ENCODE measurements at regions of chr16 and their contacts with region 1.

Region 1: DNA sequence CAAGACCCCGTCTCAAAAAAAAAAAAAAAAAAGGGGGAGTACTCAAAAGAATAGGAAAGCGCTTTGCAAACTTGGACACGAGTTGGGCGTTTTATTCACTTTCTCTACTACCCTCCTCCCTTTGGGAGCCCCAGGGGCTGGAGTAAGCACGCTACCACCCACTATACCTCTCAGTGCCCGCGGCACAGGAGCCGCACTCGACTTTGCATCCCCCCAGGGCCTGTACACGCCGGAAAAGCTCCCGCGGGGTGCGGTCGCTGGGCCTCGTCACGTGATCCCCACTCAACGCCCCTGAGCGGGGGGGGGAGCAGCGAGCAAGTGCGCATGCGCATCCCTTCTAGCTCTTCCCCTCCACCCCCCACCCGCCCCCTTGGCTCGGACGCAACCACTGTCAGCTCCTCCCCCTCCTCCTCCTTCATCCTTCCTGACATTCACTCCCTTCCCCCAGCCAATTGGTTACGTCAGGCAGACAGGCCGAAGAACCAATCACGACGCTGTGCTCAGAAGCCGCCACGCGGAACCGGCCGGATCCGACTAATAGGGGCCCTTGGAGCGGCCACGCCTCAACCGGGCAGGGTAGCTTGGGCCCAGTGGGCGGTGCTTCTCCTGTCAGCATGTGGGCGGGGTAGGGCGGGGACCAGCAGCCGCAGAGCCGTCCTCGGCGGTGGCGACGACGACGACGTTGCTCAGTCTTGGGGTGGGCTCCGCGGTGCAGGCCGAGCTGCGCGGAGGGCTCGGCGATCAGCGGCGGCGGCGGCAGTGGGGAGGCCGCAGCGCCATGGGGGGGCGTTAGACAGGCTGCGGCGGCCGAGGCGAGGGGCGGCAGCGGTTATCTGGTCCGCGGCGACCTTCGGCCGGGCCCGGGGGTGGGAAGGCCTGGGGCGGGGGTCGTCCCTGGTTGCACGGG is at the start of gene HAPSTR1:
- DNase-seq: peak; percentile 100
- ATAC-seq: peak; percentile 90
- H3K4me3 Mint-ChIP-seq: peak within 1 kb of the TSS; percentile 100
- H3K27ac Mint-ChIP-seq: peak within 1 kb of the TSS; percentile 99
- H3K4me1 Mint-ChIP-seq: peaks cover 24% of the 10 kb centered on the region
- H3K27me3 Mint-ChIP-seq: no peaks in the 10 kb centered on the region
- total RNA-seq, gene HAPSTR1: 55.8 to 60.4 TPM

Region 2: DNA sequence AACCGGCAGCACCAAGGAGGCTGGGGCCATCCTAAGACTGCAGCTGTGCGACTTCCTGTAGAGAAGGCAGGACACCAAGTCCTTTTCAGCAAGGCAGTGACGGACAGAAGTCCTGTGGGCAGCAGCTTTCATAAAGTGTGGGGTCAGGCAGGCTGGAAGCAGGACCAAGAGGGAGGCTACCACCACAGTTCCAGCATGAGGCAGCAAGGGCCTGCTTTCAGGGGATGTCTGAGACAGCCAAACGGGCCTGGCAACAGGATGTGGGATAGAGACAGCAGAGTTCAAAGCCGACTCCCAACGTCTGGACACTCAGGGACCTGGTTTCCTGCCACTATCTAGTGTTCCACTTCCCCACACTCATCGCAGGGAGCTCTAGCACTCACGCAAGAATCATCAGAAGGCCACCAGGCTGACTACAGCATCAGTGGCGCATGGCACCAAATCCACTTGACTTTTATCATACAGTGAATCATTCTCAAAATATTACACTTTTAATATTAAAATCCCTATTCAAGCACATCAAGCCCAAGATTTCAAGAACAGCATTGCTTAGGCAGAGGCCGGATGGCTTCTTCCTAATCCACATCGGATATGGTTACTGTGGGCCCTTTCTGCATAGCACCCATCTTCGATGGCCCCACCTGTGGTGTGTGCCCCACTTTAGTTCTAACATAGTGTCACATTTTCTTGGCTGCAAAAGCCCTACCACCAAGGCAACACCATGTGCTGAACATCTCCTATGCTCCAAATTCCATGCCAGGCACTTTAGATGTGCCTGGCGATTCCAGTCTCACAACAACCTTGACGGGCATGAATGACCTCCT is 132.7 kb before region 1 on chr16:
- CTCF ChIA-PET with region 1: no interaction called
- POLR2A ChIA-PET with region 1: interaction called, 12 read pairs
- DNase-seq: peak; percentile 55
- ATAC-seq: peak; percentile 43
- H3K4me3 Mint-ChIP-seq: peak overlapping the region; percentile 84
- H3K27ac Mint-ChIP-seq: peak overlapping the region; percentile 90
- H3K4me1 Mint-ChIP-seq: peaks cover 73% of the 10 kb centered on the region
- H3K27me3 Mint-ChIP-seq: no peaks in the 10 kb centered on the region

Region 3: GRCh38 chr16:8963825-8964441 is 127.3 kb before region 1 on chr16 and contains the start of gene USP7:
- CTCF ChIA-PET with region 1: no interaction called
- POLR2A ChIA-PET with region 1: interaction called, 12 read pairs
- DNase-seq: peak; percentile 94
- ATAC-seq: peak; percentile 93
- H3K4me3 Mint-ChIP-seq: peak within 1 kb of the TSS; percentile 84
- H3K27ac Mint-ChIP-seq: peak within 1 kb of the TSS; percentile 84
- H3K4me1 Mint-ChIP-seq: peaks cover 38% of the 10 kb centered on the region
- H3K27me3 Mint-ChIP-seq: no peaks in the 10 kb centered on the region
- total RNA-seq, gene USP7: 134 to 144 TPM

Region 4: DNA sequence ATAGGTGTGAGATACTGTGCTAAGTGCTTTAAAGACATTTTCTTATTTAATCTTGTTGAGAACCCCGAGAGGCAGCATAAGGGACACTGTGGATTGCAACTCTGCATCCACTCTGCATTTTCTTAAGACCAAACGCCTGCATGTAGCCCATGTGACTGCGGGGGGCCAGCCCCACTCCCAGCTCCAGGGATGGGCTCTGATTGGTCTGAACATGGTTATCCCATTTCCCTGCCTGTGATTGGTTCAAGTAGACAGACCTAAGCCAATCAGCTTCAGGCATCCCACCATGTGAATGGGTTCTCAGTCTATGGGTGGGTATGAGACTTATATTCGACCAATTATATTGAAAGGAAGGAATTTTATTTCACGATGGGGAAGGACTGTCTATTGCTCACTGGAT is 94.3 kb before region 1 on chr16:
- CTCF ChIA-PET with region 1: no interaction called
- POLR2A ChIA-PET with region 1: no interaction called
- DNase-seq: no peak
- ATAC-seq: no peak
- H3K4me3 Mint-ChIP-seq: no peak overlapping the region
- H3K27ac Mint-ChIP-seq: no peak overlapping the region
- H3K4me1 Mint-ChIP-seq: no peaks in the 10 kb centered on the region
- H3K27me3 Mint-ChIP-seq: no peaks in the 10 kb centered on the region

Region 5: GRCh38 chr16:9077091-9077809 is 14.0 kb before region 1 on chr16:
- CTCF ChIA-PET with region 1: interaction called, 8 read pairs
- POLR2A ChIA-PET with region 1: interaction called, 68 read pairs
- DNase-seq: no peak
- ATAC-seq: no peak
- H3K4me3 Mint-ChIP-seq: no peak overlapping the region
- H3K27ac Mint-ChIP-seq: peak overlapping the region; percentile 93
- H3K4me1 Mint-ChIP-seq: peaks cover 52% of the 10 kb centered on the region
- H3K27me3 Mint-ChIP-seq: no peaks in the 10 kb centered on the region

Region 6: GRCh38 chr16:9148374-9149015 is 57.3 kb after region 1 on chr16:
- CTCF ChIA-PET with region 1: no interaction called
- POLR2A ChIA-PET with region 1: no interaction called
- DNase-seq: no peak
- ATAC-seq: no peak
- H3K4me3 Mint-ChIP-seq: no peak overlapping the region
- H3K27ac Mint-ChIP-seq: no peak overlapping the region
- H3K4me1 Mint-ChIP-seq: no peaks in the 10 kb centered on the region
- H3K27me3 Mint-ChIP-seq: peaks cover 4% of the 10 kb centered on the region

Region 7: GRCh38 chr16:9311303-9311954 is 220.2 kb after region 1 on chr16:
- CTCF ChIA-PET with region 1: no interaction called
- POLR2A ChIA-PET with region 1: no interaction called
- DNase-seq: no peak
- ATAC-seq: no peak
- H3K4me3 Mint-ChIP-seq: no peak overlapping the region
- H3K27ac Mint-ChIP-seq: no peak overlapping the region
- H3K4me1 Mint-ChIP-seq: no peaks in the 10 kb centered on the region
- H3K27me3 Mint-ChIP-seq: no peaks in the 10 kb centered on the region

Measured in activated CD8-positive, alpha-beta T cell treated with anti-CD3 and anti-CD28 coated beads, Interleukin-2, amount 10 ng/mL, durations not matched to agents 7 days and 5 days (primary cell).